Psoas muscle (tissue), 8 donors: ENCODE measurements at regions of chr9 and their contacts with region 1.

Region 1: DNA sequence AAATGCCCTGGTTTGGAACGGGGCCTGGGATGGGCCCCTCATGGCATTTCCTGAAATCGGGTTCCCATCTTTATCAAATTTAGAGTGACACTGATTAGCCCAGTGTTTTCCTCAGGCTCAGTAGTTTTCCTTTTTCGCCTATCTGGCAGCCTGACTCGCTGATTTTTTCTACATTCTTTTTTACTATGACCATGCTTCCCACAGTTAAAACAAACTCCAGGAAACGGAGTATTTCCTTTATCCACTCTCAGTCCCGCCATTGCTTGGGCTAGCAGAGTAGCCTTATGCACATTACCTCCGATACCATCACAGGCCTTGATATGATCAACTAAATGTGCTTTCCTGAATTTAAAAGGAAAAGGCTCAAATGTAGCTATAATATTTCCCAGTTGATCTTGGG is 5.5 kb downstream of the OR1Q1 start:
- DNase-seq: no peak
- ATAC-seq: no peak
- H3K4me3 ChIP-seq: no peak overlapping the region
- H3K27ac ChIP-seq: no peak overlapping the region
- H3K4me1 ChIP-seq: no peaks in the 10 kb centered on the region
- H3K27me3 ChIP-seq: peaks cover 0 to 2% (median 0%) of the 10 kb centered on the region in 3 donors
- CTCF ChIP-seq: no peak

Region 2: DNA sequence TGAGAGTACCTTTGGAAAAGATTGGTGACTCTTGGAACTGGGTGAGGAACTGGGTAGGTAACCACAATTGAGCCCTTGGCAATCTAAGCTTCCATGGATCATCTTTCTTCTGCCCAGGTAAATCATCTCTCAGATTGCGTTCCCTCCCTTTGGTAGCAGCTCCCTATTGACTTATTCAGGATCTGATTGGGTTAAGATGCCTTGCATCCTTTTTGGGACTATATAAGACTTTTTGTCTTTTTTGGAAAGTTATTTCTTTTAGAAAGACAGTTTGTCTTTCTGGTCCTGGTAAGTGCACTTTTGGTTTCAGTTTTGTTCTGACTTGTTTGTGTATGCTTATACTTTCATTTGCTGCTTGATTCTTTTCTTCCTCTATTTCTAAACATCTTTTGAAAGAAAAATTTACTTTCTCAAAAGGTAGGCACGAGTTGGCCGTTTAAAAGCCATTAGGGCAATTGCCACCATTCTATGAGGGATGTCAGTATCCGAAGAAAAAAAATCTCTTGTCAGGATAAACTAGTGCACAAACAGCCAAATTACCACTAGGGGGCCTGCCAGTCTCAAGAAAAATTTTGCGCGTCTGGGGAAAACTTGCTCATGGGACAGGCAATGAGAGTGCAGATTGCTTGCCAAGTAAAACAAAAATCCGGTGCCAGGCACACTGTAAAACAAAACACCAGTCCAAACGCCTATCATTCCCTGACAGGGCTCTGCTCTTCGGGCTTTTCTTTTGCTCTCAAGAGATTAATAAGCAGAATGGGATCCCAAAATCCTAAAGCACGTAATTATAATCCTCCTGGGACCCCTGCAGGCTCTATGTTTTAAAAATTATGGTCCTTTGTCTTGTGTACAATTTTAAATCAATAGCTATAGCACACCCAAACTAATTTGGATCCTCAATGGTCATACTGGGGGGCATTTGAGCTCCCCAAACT is 155.1 kb before region 1 on chr9:
- intact Hi-C with region 1: no loop called
- DNase-seq: peak; percentile 37 to 66
- ATAC-seq: peak; percentile 58 to 90 (median 62)
- H3K4me3 ChIP-seq: peak overlapping the region; percentile 59
- H3K27ac ChIP-seq: no peak overlapping the region
- H3K4me1 ChIP-seq: peaks cover 6% of the 10 kb centered on the region
- H3K27me3 ChIP-seq: no peaks in the 10 kb centered on the region
- CTCF ChIP-seq: peak; percentile 75

Region 3: GRCh38 chr9:122580360-122580759 is 39.6 kb before region 1 on chr9:
- intact Hi-C with region 1: no loop called
- DNase-seq: no peak
- ATAC-seq: no peak
- H3K4me3 ChIP-seq: no peak overlapping the region
- H3K27ac ChIP-seq: no peak overlapping the region
- H3K4me1 ChIP-seq: no peaks in the 10 kb centered on the region
- H3K27me3 ChIP-seq: no peaks in the 10 kb centered on the region
- CTCF ChIP-seq: no peak

Region 4: DNA sequence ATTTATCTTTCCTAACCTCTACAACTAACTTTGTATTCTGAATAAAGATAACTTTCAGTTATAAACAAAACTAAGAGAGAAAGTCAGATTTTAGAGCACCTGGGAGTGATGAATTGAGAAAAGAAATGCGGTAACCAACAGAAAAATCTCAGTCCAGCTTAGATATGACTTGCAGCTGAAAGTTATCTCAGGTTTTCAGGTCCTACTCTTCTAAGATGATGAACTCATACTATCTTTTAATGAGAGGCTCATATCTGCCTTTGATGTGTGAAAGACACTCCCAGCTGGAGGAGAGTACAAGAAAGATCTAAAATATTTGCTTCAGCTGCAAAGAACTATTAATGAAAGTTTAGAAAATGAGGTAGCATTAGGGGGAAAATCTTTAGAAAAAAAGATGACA is 1119.4 kb after region 1 on chr9:
- intact Hi-C with region 1: loop called in 1 of 2 experiments (anchors 5 kb)
- DNase-seq: no peak
- ATAC-seq: no peak
- H3K4me3 ChIP-seq: no peak overlapping the region
- H3K27ac ChIP-seq: no peak overlapping the region
- H3K4me1 ChIP-seq: peaks cover 19% of the 10 kb centered on the region
- H3K27me3 ChIP-seq: no peaks in the 10 kb centered on the region
- CTCF ChIP-seq: no peak